CD4-positive, alpha-beta T cell (primary cell): ENCODE measurements at regions of chr1 and their contacts with region 1.

Region 1: GRCh38 chr1:66214901-66215300 is 319.1 kb upstream of the SGIP1 start:
- DNase-seq: peak in 6 of 14 experiments; percentile 8 to 74 (median 50)
- ATAC-seq: peak; percentile 94
- H3K4me3 ChIP-seq: no peak overlapping the region
- H3K4me3 Mint-ChIP-seq: no peak overlapping the region
- H3K27ac ChIP-seq: no peak overlapping the region
- H3K27ac Mint-ChIP-seq: peak overlapping the region; percentile 69
- H3K4me1 ChIP-seq: peaks cover 4% of the 10 kb centered on the region
- H3K4me1 Mint-ChIP-seq: peaks cover 10% of the 10 kb centered on the region
- H3K27me3 ChIP-seq: no peaks in the 10 kb centered on the region
- H3K27me3 Mint-ChIP-seq: no peaks in the 10 kb centered on the region
- CTCF ChIP-seq: no peak

Region 2: GRCh38 chr1:65799601-65800000 is 415.3 kb before region 1 on chr1:
- CTCF ChIA-PET with region 1: no interaction called
- POLR2A ChIA-PET with region 1: no interaction called
- intact Hi-C with region 1: no loop called
- DNase-seq: no peak
- ATAC-seq: no peak
- H3K4me3 ChIP-seq: no peak overlapping the region
- H3K4me3 Mint-ChIP-seq: no peak overlapping the region
- H3K27ac ChIP-seq: no peak overlapping the region
- H3K27ac Mint-ChIP-seq: no peak overlapping the region
- H3K4me1 ChIP-seq: no peaks in the 10 kb centered on the region
- H3K4me1 Mint-ChIP-seq: no peaks in the 10 kb centered on the region
- H3K27me3 ChIP-seq: peaks cover 6 to 10% of the 10 kb centered on the region in 2 experiments
- H3K27me3 Mint-ChIP-seq: peaks cover 30% of the 10 kb centered on the region
- CTCF ChIP-seq: no peak

Region 3: DNA sequence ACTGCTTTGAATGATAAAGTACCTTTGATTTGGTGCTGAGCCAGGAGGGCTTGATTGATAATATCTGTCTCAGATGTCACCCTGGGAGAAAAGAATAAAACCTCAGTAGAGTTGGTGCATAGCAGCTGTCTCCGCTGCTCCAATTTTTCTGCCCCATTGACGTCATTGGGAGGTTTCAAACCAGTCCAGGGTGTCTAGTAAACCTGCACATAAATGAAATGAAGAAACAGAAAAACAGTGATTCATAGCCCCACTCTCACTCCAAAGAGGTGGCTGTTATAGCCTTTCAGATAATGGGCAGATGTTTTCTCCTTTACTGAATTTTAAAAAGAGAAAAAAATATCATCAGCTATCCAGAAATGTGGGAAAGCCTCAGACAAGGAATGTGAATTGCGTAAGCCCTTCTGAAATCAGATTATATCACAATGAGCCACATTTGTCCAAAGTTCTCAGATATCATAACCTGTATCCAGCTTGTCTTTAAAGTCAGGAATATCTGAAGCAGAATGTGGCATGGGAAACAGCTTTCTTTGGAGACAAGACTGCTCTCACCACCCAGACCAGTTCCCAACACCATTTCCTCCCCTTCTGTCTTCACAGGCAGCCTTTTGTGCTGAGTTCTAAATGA is 32.2 kb before region 1 on chr1:
- CTCF ChIA-PET with region 1: no interaction called
- POLR2A ChIA-PET with region 1: interaction called, 4 read pairs
- intact Hi-C with region 1: loop called in 1 of 2 experiments (anchors 2 kb)
- DNase-seq: peak in 13 of 14 experiments; percentile 2 to 72 (median 25)
- ATAC-seq: peak; percentile 90
- H3K4me3 ChIP-seq: no peak overlapping the region
- H3K4me3 Mint-ChIP-seq: peak overlapping the region; percentile 55
- H3K27ac ChIP-seq: no peak overlapping the region
- H3K27ac Mint-ChIP-seq: peak overlapping the region; percentile 62
- H3K4me1 ChIP-seq: peaks cover 4% of the 10 kb centered on the region
- H3K4me1 Mint-ChIP-seq: peaks cover 29% of the 10 kb centered on the region
- H3K27me3 ChIP-seq: no peaks in the 10 kb centered on the region
- H3K27me3 Mint-ChIP-seq: no peaks in the 10 kb centered on the region
- CTCF ChIP-seq: no peak